Activated naive CD4-positive, alpha-beta T cell treated with anti-CD3 and anti-CD28 coated beads for 36 hours (primary cell): ENCODE measurements at regions of chr12 and their contacts with region 1.

Region 1: GRCh38 chr12:78698746-78699145 is 165.8 kb upstream of the SYT1 start:
- DNase-seq: no peak
- H3K4me3 Mint-ChIP-seq: no peak overlapping the region
- H3K27ac Mint-ChIP-seq: no peak overlapping the region
- H3K4me1 Mint-ChIP-seq: no peaks in the 10 kb centered on the region
- H3K27me3 Mint-ChIP-seq: no peaks in the 10 kb centered on the region

Region 2: GRCh38 chr12:78470354-78471195 is 228.2 kb before region 1 on chr12:
- CTCF ChIA-PET with region 1: no interaction called
- intact Hi-C with region 1: no loop called
- DNase-seq: no peak
- H3K4me3 Mint-ChIP-seq: no peak overlapping the region
- H3K27ac Mint-ChIP-seq: no peak overlapping the region
- H3K4me1 Mint-ChIP-seq: no peaks in the 10 kb centered on the region
- H3K27me3 Mint-ChIP-seq: no peaks in the 10 kb centered on the region

Region 3: GRCh38 chr12:78636231-78636855 is 62.4 kb before region 1 on chr12:
- CTCF ChIA-PET with region 1: no interaction called
- intact Hi-C with region 1: loop called (anchors 10 kb)
- DNase-seq: no peak
- H3K4me3 Mint-ChIP-seq: no peak overlapping the region
- H3K27ac Mint-ChIP-seq: no peak overlapping the region
- H3K4me1 Mint-ChIP-seq: no peaks in the 10 kb centered on the region
- H3K27me3 Mint-ChIP-seq: no peaks in the 10 kb centered on the region

Region 4: DNA sequence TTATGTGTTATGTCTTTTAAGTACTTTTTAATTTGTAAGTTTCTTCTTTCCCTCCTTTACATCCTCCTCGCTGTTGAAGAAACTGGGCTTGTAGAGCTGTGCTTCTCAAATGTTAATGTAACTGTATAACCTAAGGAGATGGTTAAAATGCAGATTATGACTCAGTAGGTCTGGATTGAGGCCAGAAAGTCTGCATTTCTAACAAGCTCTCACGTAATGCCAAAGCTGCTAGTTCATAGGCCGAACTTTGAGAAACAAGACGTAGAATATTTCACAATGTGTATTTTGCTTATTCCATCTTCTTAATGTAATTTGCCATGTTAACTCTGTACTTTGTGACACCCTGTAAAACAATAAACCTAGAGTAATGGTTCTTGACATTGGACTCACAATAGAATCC is 27.5 kb before region 1 on chr12:
- CTCF ChIA-PET with region 1: no interaction called
- intact Hi-C with region 1: no loop called
- DNase-seq: no peak
- H3K4me3 Mint-ChIP-seq: no peak overlapping the region
- H3K27ac Mint-ChIP-seq: no peak overlapping the region
- H3K4me1 Mint-ChIP-seq: no peaks in the 10 kb centered on the region
- H3K27me3 Mint-ChIP-seq: no peaks in the 10 kb centered on the region

Region 5: DNA sequence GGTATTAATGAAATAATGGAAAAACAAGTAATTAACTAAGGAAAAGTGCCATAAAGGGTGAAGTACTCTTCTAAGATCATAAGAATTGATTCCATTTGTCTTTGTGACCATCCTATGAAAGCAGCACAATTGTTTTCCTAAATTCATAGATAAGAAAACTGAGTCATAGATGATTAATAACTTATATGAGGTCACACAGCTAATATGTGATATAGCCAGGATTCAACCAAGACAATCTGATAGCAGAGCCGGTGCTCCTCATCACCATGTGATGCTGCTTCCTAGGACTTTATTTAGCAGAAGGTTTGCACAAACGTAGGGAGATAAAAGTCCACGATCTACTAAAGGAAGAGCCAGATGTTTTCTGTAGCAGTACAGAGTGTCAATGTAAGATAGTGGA is 15.7 kb before region 1 on chr12:
- CTCF ChIA-PET with region 1: no interaction called
- intact Hi-C with region 1: no loop called
- DNase-seq: no peak
- H3K4me3 Mint-ChIP-seq: no peak overlapping the region
- H3K27ac Mint-ChIP-seq: no peak overlapping the region
- H3K4me1 Mint-ChIP-seq: no peaks in the 10 kb centered on the region
- H3K27me3 Mint-ChIP-seq: no peaks in the 10 kb centered on the region